ENCODE measurements at regions of chr6 and their contacts with region 1.

Region 1: GRCh38 chr6:33700391-33701050 is 11.0 kb downstream of the UQCC2 start:
- DNase-seq: peak; percentile 60 to 88 (median 72)
- ATAC-seq: peak; percentile 58
- H3K4me3 ChIP-seq: no peak overlapping the region
- H3K4me3 Mint-ChIP-seq: no peak overlapping the region
- H3K27ac ChIP-seq: no peak overlapping the region
- H3K27ac Mint-ChIP-seq: peak overlapping the region; percentile 84
- H3K4me1 ChIP-seq: peaks cover 42% of the 10 kb centered on the region
- H3K4me1 Mint-ChIP-seq: peaks cover 50% of the 10 kb centered on the region
- H3K27me3 ChIP-seq: no peaks in the 10 kb centered on the region
- H3K27me3 Mint-ChIP-seq: no peaks in the 10 kb centered on the region
- CTCF ChIP-seq: peak; percentile 73

Region 2: GRCh38 chr6:33633462-33634158 is 66.9 kb before region 1 on chr6:
- CTCF ChIA-PET with region 1: interaction called, 4 read pairs
- POLR2A ChIA-PET with region 1: no interaction called
- intact Hi-C with region 1: loop called in 1 of 2 experiments (anchors 5 kb)
- DNase-seq: peak in 13 of 14 experiments; percentile 17 to 85 (median 49)
- ATAC-seq: peak; percentile 63
- H3K4me3 ChIP-seq: peak overlapping the region; percentile 55
- H3K4me3 Mint-ChIP-seq: peak overlapping the region; percentile 93
- H3K27ac ChIP-seq: no peak overlapping the region
- H3K27ac Mint-ChIP-seq: peak overlapping the region; percentile 68
- H3K4me1 ChIP-seq: peaks cover 56% of the 10 kb centered on the region
- H3K4me1 Mint-ChIP-seq: peaks cover 71% of the 10 kb centered on the region
- H3K27me3 ChIP-seq: no peaks in the 10 kb centered on the region
- H3K27me3 Mint-ChIP-seq: no peaks in the 10 kb centered on the region
- CTCF ChIP-seq: no peak

Region 3: DNA sequence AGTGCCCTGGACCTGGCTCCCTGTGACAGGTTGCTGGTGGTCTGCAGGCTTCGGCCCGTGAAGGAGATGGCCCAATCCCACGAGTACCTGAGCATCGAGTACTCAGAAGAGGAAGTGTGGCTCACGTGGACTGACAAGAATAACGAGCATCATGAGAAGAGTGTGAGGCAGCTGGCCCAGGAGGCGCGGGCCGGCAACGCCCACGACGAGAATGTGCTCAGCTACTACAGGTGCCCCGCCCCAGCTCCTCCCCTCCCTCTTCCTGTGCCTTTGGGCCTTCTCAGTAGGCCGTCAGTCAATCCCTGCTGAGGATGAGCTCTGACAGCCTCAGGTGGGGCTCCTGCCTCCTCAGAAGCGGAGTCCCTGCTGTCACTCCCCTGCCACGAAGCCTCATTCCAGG is 31.6 kb before region 1 on chr6:
- CTCF ChIA-PET with region 1: interaction called, 6 read pairs
- POLR2A ChIA-PET with region 1: no interaction called
- intact Hi-C with region 1: loop called in 1 of 2 experiments (anchors 5 kb)
- DNase-seq: peak; percentile 54 to 88 (median 74)
- ATAC-seq: peak; percentile 99
- H3K4me3 ChIP-seq: no peak overlapping the region
- H3K4me3 Mint-ChIP-seq: no peak overlapping the region
- H3K27ac ChIP-seq: peak overlapping the region in 1 of 2 donors; percentile 40
- H3K27ac Mint-ChIP-seq: peak overlapping the region; percentile 81
- H3K4me1 ChIP-seq: peaks cover 19% of the 10 kb centered on the region
- H3K4me1 Mint-ChIP-seq: peaks cover 14% of the 10 kb centered on the region
- H3K27me3 ChIP-seq: no peaks in the 10 kb centered on the region
- H3K27me3 Mint-ChIP-seq: no peaks in the 10 kb centered on the region
- CTCF ChIP-seq: no peak

Region 4: GRCh38 chr6:33768644-33769120 is 68.2 kb after region 1 on chr6:
- CTCF ChIA-PET with region 1: no interaction called
- POLR2A ChIA-PET with region 1: no interaction called
- intact Hi-C with region 1: no loop called
- DNase-seq: peak; percentile 49 to 80 (median 66)
- ATAC-seq: peak; percentile 64
- H3K4me3 ChIP-seq: no peak overlapping the region
- H3K4me3 Mint-ChIP-seq: no peak overlapping the region
- H3K27ac ChIP-seq: no peak overlapping the region
- H3K27ac Mint-ChIP-seq: no peak overlapping the region
- H3K4me1 ChIP-seq: peaks cover 21% of the 10 kb centered on the region
- H3K4me1 Mint-ChIP-seq: peaks cover 17% of the 10 kb centered on the region
- H3K27me3 ChIP-seq: peaks cover 0 to 3% of the 10 kb centered on the region in 2 experiments
- H3K27me3 Mint-ChIP-seq: no peaks in the 10 kb centered on the region
- CTCF ChIP-seq: peak; percentile 73

Region 5: DNA sequence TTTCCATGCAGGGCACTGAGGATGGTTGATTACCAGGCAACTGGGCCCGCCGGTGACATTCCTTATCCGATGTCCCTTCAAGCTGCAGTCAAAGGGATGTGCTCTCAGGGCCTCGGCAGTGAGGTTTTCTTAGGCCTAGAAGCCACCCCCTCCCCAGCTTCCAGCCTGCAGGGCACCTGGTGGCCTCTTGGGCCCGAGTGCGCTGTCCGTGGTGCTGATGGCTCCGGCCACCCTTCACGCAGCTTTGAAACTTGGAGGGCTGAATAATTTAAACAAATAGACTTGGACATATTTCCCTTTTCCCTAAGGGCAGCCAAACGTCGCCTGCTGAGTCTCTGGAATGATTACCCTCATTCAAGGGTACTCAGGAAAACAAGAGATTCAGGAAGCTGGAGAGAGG is 112.1 kb after region 1 on chr6:
- CTCF ChIA-PET with region 1: no interaction called
- POLR2A ChIA-PET with region 1: no interaction called
- intact Hi-C with region 1: no loop called
- DNase-seq: peak in 13 of 14 experiments; percentile 7 to 54 (median 21)
- ATAC-seq: no peak
- H3K4me3 ChIP-seq: no peak overlapping the region
- H3K4me3 Mint-ChIP-seq: no peak overlapping the region
- H3K27ac ChIP-seq: no peak overlapping the region
- H3K27ac Mint-ChIP-seq: no peak overlapping the region
- H3K4me1 ChIP-seq: peaks cover 8% of the 10 kb centered on the region
- H3K4me1 Mint-ChIP-seq: peaks cover 18% of the 10 kb centered on the region
- H3K27me3 ChIP-seq: peaks cover 46 to 48% of the 10 kb centered on the region in 2 experiments
- H3K27me3 Mint-ChIP-seq: peaks cover 75% of the 10 kb centered on the region
- CTCF ChIP-seq: no peak

Measured in CD4-positive, alpha-beta T cell (primary cell).